CD8-positive, alpha-beta T cell (primary cell): ENCODE measurements at regions of chr10 and their contacts with region 1.

Region 1: GRCh38 chr10:22714479-22715289 is at the start of gene PIP4K2A:
- DNase-seq: peak; percentile 43 to 92 (median 75)
- ATAC-seq: peak; percentile 76
- H3K4me3 ChIP-seq: peak within 1 kb of the TSS; percentile 72 to 95
- H3K4me3 Mint-ChIP-seq: peak within 1 kb of the TSS; percentile 94
- H3K27ac ChIP-seq: peak within 1 kb of the TSS; percentile 78 to 81
- H3K27ac Mint-ChIP-seq: peak within 1 kb of the TSS; percentile 92
- H3K4me1 ChIP-seq: peaks cover 25% of the 10 kb centered on the region
- H3K4me1 Mint-ChIP-seq: peaks cover 30% of the 10 kb centered on the region
- H3K27me3 ChIP-seq: no peaks in the 10 kb centered on the region
- H3K27me3 Mint-ChIP-seq: no peaks in the 10 kb centered on the region
- CTCF ChIP-seq: no peak
- total RNA-seq, gene PIP4K2A: 82.5 to 89.5 TPM

Region 2: DNA sequence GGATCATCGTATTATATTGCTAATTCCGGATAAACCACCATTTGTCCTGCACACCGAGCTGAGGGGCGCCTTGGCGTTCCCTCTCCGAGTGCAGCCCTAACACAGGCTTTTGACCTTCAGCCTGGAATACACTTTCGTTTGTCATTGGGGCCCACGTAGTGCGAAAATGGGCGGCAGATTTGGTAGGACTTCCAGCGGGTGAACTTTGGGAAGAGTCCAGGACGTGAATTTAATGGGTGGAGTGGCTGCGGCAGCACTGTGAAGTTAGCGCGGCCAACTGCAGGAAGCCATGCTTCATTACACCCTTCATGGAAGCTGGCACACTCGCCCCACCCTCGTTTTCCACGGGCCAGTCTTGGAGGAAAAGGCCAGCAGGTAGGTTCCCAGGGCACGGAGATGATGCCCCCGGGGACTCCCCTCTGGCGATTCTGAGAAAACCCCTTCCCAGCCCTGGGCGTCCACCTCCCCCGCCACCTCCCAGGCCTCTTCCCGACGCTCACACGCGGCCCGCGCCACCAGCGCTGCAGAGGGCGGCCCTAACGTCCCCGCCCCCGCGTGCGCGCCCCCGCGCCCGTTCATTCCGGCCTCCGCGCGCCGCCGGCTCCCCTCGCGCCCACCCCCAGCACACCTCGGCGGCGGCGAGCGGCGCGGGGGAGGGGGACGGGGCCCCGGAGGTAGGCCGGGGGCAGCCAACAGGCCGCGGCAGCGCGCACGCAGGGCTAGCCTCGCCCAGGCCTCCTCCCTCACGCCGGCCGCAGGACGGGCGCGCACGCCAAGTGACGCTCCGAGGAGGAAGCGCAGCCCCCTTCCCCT is 1181.0 kb before region 1 on chr10 and contains the start of gene MLLT10:
- CTCF ChIA-PET with region 1: no interaction called
- POLR2A ChIA-PET with region 1: no interaction called
- intact Hi-C with region 1: loop called in 1 of 2 experiments (anchors 10 kb)
- DNase-seq: peak; percentile 83 to 98 (median 92)
- ATAC-seq: peak; percentile 84
- H3K4me3 ChIP-seq: peak within 1 kb of the TSS; percentile 69 to 81
- H3K4me3 Mint-ChIP-seq: peak within 1 kb of the TSS; percentile 96
- H3K27ac ChIP-seq: peak within 1 kb of the TSS; percentile 64 to 75
- H3K27ac Mint-ChIP-seq: peak within 1 kb of the TSS; percentile 94
- H3K4me1 ChIP-seq: peaks cover 16% of the 10 kb centered on the region
- H3K4me1 Mint-ChIP-seq: peaks cover 29% of the 10 kb centered on the region
- H3K27me3 ChIP-seq: no peaks in the 10 kb centered on the region
- H3K27me3 Mint-ChIP-seq: no peaks in the 10 kb centered on the region
- CTCF ChIP-seq: peak; percentile 22
- total RNA-seq, gene MLLT10: 36.7 to 41.0 TPM

Region 3: DNA sequence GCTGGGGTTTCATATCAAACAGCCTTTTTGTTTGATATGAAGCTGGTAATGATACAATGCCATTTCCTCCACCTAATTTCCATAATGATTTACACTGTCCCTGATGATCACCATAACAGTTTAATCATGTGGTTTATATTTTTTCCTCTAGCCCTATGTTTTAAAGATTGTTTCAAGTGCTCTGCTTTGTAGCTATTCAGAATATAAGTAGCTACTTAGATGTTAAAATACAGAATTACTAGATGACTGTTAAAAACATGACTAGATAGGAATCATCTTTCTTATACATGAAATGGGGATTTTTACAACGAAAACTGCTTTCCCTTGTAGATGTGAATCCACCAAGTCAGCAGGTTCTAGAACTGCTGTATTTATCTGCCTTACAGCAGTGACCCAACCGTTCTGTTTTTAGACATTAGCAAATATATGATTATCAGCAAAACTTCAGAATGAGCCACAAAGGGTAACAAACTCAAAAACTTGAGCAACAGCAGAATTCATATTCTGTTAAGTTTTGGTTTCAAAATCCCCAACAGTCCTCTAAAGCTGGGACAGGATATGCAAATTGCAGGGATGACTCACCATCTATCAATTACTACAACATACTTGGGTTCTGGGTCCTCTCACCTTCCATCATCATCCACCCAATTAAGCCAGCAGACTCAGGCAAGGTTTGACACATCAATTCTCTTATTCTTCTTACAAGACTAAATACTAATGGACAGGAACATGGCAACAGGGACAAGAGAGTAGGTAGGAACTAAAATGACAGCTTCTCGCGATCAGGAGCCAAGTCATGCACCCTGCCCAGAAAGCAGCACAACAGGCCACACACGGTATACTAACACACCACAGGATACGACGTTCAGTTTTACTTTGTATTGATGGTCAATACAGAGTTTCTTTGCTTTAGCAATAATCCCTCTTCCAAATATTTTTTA is 84.2 kb before region 1 on chr10:
- CTCF ChIA-PET with region 1: interaction called, 3 read pairs
- POLR2A ChIA-PET with region 1: interaction called, 6 read pairs
- intact Hi-C with region 1: loop called in 1 of 2 experiments (anchors 1 kb)
- DNase-seq: peak in 4 of 9 experiments; percentile 39 to 91 (median 68)
- ATAC-seq: peak; percentile 79
- H3K4me3 ChIP-seq: peak overlapping the region; percentile 16 to 21
- H3K4me3 Mint-ChIP-seq: peak overlapping the region; percentile 72
- H3K27ac ChIP-seq: peak overlapping the region; percentile 16 to 81
- H3K27ac Mint-ChIP-seq: peak overlapping the region; percentile 97
- H3K4me1 ChIP-seq: peaks cover 96% of the 10 kb centered on the region
- H3K4me1 Mint-ChIP-seq: peaks cover 96% of the 10 kb centered on the region
- H3K27me3 ChIP-seq: no peaks in the 10 kb centered on the region
- H3K27me3 Mint-ChIP-seq: no peaks in the 10 kb centered on the region
- CTCF ChIP-seq: no peak

Region 4: GRCh38 chr10:22666287-22667092 is 48.2 kb before region 1 on chr10:
- CTCF ChIA-PET with region 1: interaction called, 4 read pairs
- POLR2A ChIA-PET with region 1: interaction called, 4 read pairs
- intact Hi-C with region 1: loop called in 1 of 2 experiments (anchors 2 kb)
- DNase-seq: peak; percentile 30 to 92 (median 67)
- ATAC-seq: peak; percentile 84
- H3K4me3 ChIP-seq: peak overlapping the region; percentile 29 to 42
- H3K4me3 Mint-ChIP-seq: peak overlapping the region; percentile 79
- H3K27ac ChIP-seq: peak overlapping the region; percentile 41 to 67
- H3K27ac Mint-ChIP-seq: peak overlapping the region; percentile 90
- H3K4me1 ChIP-seq: peaks cover 87% of the 10 kb centered on the region
- H3K4me1 Mint-ChIP-seq: peaks cover 83% of the 10 kb centered on the region
- H3K27me3 ChIP-seq: no peaks in the 10 kb centered on the region
- H3K27me3 Mint-ChIP-seq: no peaks in the 10 kb centered on the region
- CTCF ChIP-seq: no peak

Region 5: GRCh38 chr10:23005150-23005549 is 290.5 kb after region 1 on chr10:
- CTCF ChIA-PET with region 1: no interaction called
- POLR2A ChIA-PET with region 1: no interaction called
- intact Hi-C with region 1: no loop called
- DNase-seq: no peak
- ATAC-seq: no peak
- H3K4me3 ChIP-seq: no peak overlapping the region
- H3K4me3 Mint-ChIP-seq: no peak overlapping the region
- H3K27ac ChIP-seq: no peak overlapping the region
- H3K27ac Mint-ChIP-seq: no peak overlapping the region
- H3K4me1 ChIP-seq: no peaks in the 10 kb centered on the region
- H3K4me1 Mint-ChIP-seq: no peaks in the 10 kb centered on the region
- H3K27me3 ChIP-seq: peaks cover 0 to 6% of the 10 kb centered on the region in 2 experiments
- H3K27me3 Mint-ChIP-seq: peaks cover 34% of the 10 kb centered on the region
- CTCF ChIP-seq: no peak